SK-N-SH (cell line): ENCODE measurements at regions of chr3 and their contacts with region 1.

Region 1: DNA sequence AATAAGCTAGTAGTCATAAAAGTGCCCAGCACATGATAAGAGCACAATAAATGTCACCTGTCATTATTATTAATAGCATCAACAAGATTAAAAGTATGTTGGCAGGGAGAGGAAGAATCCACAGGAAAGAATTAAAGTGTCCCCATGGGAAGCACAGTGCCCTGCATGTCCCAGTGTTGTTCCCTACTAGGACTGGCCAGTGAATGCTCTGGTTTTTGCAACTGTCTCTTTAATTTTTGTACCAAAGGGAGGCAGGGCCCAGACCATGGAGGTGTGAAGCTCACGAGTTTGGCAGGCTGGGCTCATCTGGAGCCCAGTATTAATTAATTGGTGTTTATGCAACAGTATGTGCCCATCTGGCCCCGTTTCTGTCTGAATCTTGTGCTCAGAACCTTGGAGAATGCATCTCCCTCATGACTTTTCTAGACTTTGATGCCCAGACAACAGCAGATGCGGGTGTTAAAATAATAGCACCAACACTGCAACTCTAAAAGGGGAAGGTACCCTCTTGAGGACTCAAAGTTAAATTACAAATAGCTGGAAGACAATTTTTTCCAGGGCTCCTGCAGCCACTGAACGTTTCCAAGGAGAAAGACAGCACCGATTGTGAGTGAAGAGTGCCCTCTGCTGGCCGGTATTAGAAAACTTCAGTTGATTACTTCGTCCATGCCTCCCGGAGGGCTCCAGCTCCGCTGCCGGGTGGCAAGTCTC is 71.9 kb upstream of the SPATA12 start:
- DNase-seq: peak; percentile 71
- H3K4me3 ChIP-seq: no peak overlapping the region; a peak in 1 of 4 replicates
- H3K27ac ChIP-seq: no peak overlapping the region
- H3K4me1 ChIP-seq: peaks cover 4 to 20% of the 10 kb centered on the region in 2 experiments; a peak in 2 of 4 replicates
- H3K27me3 ChIP-seq: no peaks in the 10 kb centered on the region
- CTCF ChIP-seq: peak; percentile 84
- EP300 ChIP-seq: no peak
- RAD21 ChIP-seq: peak; percentile 99

Region 2: GRCh38 chr3:56702490-56703315 is 285.9 kb before region 1 on chr3:
- CTCF ChIA-PET with region 1: interaction called, 199 read pairs
- POLR2A ChIA-PET with region 1: interaction called, 4 read pairs
- DNase-seq: peak; percentile 57
- H3K4me3 ChIP-seq: peak overlapping the region in 1 of 2 experiments; percentile 21; a peak in 1 of 4 replicates
- H3K27ac ChIP-seq: no peak overlapping the region
- H3K4me1 ChIP-seq: no peaks in the 10 kb centered on the region
- H3K27me3 ChIP-seq: no peaks in the 10 kb centered on the region
- CTCF ChIP-seq: peak; percentile 95
- EP300 ChIP-seq: no peak
- RAD21 ChIP-seq: peak; percentile 96

Region 3: GRCh38 chr3:56787784-56788256 is 200.8 kb before region 1 on chr3:
- CTCF ChIA-PET with region 1: interaction called, 20 read pairs
- POLR2A ChIA-PET with region 1: no interaction called
- DNase-seq: no peak
- H3K4me3 ChIP-seq: no peak overlapping the region
- H3K27ac ChIP-seq: no peak overlapping the region
- H3K4me1 ChIP-seq: peaks cover 7 to 30% of the 10 kb centered on the region in 2 experiments
- H3K27me3 ChIP-seq: no peaks in the 10 kb centered on the region
- CTCF ChIP-seq: no peak
- EP300 ChIP-seq: no peak
- RAD21 ChIP-seq: no peak

Region 4: DNA sequence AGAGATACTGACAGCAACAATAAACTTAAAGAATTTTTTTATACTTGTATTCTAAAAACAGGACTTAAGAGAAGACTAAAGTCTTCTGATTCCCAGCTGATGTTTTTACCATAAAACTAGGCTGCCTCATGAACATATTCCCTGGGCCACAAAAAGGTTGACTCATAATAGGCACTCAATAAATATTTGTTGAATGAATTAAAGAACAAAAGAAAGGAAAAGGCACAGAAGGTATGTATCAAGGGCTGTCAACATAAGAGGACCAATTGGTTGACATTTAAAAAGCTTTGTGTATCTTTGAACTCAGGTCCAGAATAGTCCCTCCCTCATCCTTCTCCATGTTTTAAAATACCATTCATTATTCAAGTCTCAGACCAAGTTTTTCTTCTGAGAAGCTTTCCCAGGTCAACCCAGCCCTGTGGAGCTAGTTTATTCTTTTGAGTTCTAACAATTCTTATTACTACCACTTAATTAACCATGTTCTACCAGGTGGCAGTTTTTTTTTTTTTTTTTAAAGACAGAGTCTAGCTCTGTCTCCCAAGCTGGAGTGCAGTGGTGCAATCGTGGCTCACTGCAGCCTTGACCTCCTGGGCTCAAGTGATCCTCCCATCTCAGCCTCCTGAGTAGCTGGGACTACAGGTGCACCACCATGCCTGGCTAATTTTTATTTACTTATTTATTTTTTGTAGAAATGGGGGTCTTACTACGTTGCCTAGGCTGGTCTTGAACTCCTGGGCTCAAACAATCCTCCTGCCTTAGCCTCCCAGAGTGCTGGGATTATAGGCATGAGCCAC is 169.4 kb before region 1 on chr3:
- CTCF ChIA-PET with region 1: interaction called, 11 read pairs
- POLR2A ChIA-PET with region 1: no interaction called
- DNase-seq: no peak
- H3K4me3 ChIP-seq: no peak overlapping the region
- H3K27ac ChIP-seq: no peak overlapping the region
- H3K4me1 ChIP-seq: peaks cover 0 to 10% of the 10 kb centered on the region in 2 experiments; a peak in 2 of 4 replicates
- H3K27me3 ChIP-seq: no peaks in the 10 kb centered on the region
- CTCF ChIP-seq: no peak
- EP300 ChIP-seq: no peak
- RAD21 ChIP-seq: no peak

Region 5: GRCh38 chr3:56878074-56878473 is 110.5 kb before region 1 on chr3:
- CTCF ChIA-PET with region 1: interaction called, 12 read pairs
- POLR2A ChIA-PET with region 1: no interaction called
- DNase-seq: no peak
- H3K4me3 ChIP-seq: no peak overlapping the region
- H3K27ac ChIP-seq: no peak overlapping the region
- H3K4me1 ChIP-seq: peaks cover 0 to 18% of the 10 kb centered on the region in 2 experiments; a peak in 3 of 4 replicates
- H3K27me3 ChIP-seq: no peaks in the 10 kb centered on the region
- CTCF ChIP-seq: no peak
- EP300 ChIP-seq: no peak
- RAD21 ChIP-seq: no peak

Region 6: DNA sequence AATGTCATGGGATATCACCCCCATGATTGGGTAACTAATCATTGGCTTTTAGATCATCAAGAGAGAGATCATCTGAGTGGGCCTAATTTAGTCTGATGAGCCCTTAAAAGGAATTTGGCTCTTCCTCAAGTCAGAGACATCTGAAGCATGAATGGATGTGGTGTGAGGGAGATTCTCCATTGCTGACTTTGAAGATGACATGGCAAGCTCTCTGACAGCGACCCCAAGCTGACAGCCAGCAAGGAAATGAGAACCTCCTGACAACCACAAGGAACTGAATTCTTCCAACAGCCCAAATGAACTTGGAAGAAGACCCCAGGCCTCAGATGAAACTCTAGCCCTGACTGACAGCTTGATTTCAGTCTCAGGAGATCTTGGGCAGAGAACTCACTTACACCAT is 36.6 kb before region 1 on chr3:
- CTCF ChIA-PET with region 1: no interaction called
- POLR2A ChIA-PET with region 1: no interaction called
- DNase-seq: no peak
- H3K4me3 ChIP-seq: no peak overlapping the region
- H3K27ac ChIP-seq: no peak overlapping the region
- H3K4me1 ChIP-seq: peaks cover 0 to 9% of the 10 kb centered on the region in 2 experiments; a peak in 1 of 4 replicates
- H3K27me3 ChIP-seq: no peaks in the 10 kb centered on the region
- CTCF ChIP-seq: no peak
- EP300 ChIP-seq: no peak
- RAD21 ChIP-seq: no peak

Region 7: GRCh38 chr3:57221883-57222282 is 233.3 kb after region 1 on chr3:
- CTCF ChIA-PET with region 1: interaction called, 22 read pairs
- POLR2A ChIA-PET with region 1: no interaction called
- DNase-seq: peak; percentile 36
- H3K4me3 ChIP-seq: no peak overlapping the region
- H3K27ac ChIP-seq: no peak overlapping the region
- H3K4me1 ChIP-seq: peaks cover 0 to 3% of the 10 kb centered on the region in 2 experiments; a peak in 2 of 4 replicates
- H3K27me3 ChIP-seq: no peaks in the 10 kb centered on the region
- CTCF ChIP-seq: peak; percentile 53
- EP300 ChIP-seq: no peak
- RAD21 ChIP-seq: peak; percentile 80